ENCODE measurements at regions of chr17 and their contacts with region 1.

Region 1: DNA sequence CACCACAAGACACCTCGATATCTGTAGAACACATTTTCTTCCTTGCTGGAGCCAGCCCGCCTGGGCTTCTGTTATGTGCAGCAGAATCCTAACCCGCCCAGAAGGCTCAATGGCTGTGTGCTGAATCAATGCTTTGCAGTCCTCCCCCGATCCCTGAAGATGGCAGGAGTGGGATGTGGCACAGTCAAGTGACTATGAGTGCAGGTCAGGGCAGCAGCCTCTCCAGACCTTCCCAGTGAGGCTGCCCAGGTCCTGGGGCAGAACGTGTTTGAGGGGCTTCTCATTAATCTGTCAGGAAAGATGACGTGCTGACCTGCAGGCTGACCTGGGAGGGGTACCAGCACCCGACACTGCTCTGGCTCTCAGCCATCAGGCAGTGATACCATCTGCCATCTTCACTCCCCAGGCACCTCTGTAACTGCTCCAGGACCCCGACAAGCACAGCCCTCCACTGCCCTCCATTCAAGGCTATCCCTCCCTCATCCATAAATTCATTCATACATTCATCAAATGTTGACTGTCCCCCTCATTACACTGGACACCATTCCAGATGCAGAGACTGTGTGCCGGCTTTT is 35.2 kb downstream of the LRRC75A start:
- DNase-seq: no peak
- ATAC-seq: no peak
- H3K4me3 ChIP-seq: no peak overlapping the region
- H3K27ac ChIP-seq: no peak overlapping the region
- H3K4me1 ChIP-seq: peaks cover 2% of the 10 kb centered on the region
- H3K27me3 ChIP-seq: no peaks in the 10 kb centered on the region

Region 2: GRCh38 chr17:16512011-16512410 is 55.2 kb after region 1 on chr17:
- intact Hi-C with region 1: loop called in 2 of 4 experiments (anchors 2 to 5 kb)
- DNase-seq: no peak
- ATAC-seq: no peak
- H3K4me3 ChIP-seq: no peak overlapping the region
- H3K27ac ChIP-seq: no peak overlapping the region
- H3K4me1 ChIP-seq: no peaks in the 10 kb centered on the region
- H3K27me3 ChIP-seq: no peaks in the 10 kb centered on the region

Region 3: DNA sequence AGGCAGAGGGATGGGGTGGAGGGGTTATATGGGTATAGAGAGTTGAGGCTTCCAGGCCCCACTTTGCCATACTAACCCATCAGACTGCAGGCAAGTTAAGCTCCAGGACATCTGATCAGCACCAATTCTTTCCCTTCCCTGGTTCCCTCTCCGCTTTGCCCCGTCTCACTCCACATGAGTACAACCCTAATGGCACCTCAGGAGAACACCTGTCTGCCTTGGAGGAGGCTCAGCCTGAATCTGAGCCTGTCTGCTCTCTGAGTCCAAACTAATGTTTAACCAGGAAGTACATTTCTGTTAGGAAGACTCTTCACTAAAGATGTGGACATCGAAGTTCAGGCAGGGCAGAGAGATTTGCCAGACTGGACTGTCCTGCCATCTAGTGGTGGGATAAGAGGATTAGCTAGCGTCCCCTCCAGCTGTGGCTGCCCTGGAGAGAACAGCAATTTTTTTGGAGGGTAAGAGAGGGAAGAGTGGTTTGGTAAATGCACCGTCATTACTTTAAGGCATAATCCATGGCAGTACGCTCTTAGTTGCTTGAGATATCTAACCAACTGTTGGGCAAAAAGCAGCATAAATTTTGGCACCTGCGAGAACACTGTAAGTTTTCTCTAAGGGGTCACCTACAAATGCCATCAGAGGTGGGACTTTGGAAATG is 64.4 kb after region 1 on chr17:
- intact Hi-C with region 1: loop called (anchors 2 to 5 kb)
- DNase-seq: peak; percentile 66 to 73 (median 73)
- ATAC-seq: peak; percentile 90 to 93
- H3K4me3 ChIP-seq: no peak overlapping the region
- H3K27ac ChIP-seq: no peak overlapping the region
- H3K4me1 ChIP-seq: no peaks in the 10 kb centered on the region
- H3K27me3 ChIP-seq: no peaks in the 10 kb centered on the region